Naive thymus-derived CD4-positive, alpha-beta T cell (primary cell): ENCODE measurements at regions of chr17 and their contacts with region 1.

Region 1: GRCh38 chr17:18038861-18039534 is at the starts of genes ATPAF2 and GID4:
- DNase-seq: peak; percentile 99 to 100 (median 100)
- ATAC-seq: peak; percentile 96
- H3K4me3 ChIP-seq: peak within 1 kb of the TSS; percentile 79
- H3K4me3 Mint-ChIP-seq: peak within 1 kb of the TSS; percentile 88 to 100 (median 98)
- H3K27ac ChIP-seq: peak within 1 kb of the TSS; percentile 88
- H3K27ac Mint-ChIP-seq: peak within 1 kb of the TSS; percentile 87 to 99 (median 97)
- H3K4me1 ChIP-seq: peaks cover 23 to 30% of the 10 kb centered on the region in 2 donors
- H3K4me1 Mint-ChIP-seq: peaks cover 42 to 70% (median 53%) of the 10 kb centered on the region in 7 donors
- H3K27me3 ChIP-seq: no peaks in the 10 kb centered on the region
- H3K27me3 Mint-ChIP-seq: no peaks in the 10 kb centered on the region
- total RNA-seq, gene ATPAF2: 26.3 to 36.7 (median 32.5) TPM
- total RNA-seq, gene GID4: 6.0 to 11.4 (median 10.0) TPM

Region 2: DNA sequence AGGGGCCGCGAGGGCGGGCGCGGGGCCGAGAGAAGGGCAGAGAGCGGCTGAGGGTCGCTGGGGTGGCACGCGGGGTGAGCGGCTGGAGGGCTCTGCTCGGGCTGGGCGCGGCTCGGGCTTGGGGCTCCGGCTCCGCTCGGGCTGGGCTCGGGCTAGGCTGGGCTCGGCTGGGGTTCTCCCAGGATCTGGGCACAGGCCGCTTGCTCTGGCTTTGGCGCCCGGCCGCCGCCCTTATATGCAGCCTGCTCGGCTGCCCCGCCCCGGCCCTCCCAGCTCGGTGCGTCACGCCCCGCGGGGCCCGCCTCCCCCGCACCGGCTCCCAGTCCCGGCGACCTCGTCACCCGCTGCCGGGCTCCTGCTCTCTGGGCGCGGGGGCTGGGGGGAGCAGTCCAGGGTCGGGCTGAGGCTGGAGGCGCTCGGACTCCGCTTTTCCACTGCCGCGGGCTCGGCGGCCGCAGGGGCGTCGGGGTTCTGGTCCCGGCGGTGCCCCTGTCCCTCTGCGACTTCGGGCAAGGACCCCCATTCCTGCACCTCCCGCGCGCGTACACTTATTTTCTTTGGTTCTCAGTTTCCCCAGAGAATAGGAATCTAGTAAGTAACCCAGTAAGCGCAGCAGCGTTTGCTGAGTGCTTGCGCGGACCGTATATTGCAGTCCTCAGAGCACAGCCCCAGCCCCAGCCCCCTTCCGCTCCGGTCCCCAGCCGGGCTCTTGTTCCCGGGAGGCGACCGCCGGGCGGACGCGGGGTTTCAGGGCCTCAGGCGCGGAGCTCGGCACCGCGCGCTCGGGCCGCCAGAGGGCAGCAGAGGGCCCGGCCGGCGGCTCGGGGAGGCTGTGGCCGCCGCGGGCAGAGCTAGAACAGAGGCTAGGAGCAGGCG is 542.6 kb before region 1 on chr17 and contains the start of gene RASD1:
- CTCF ChIA-PET with region 1: no interaction called
- POLR2A ChIA-PET with region 1: no interaction called
- intact Hi-C with region 1: loop called (anchors 5 kb)
- DNase-seq: peak; percentile 61 to 89 (median 74)
- ATAC-seq: peak; percentile 90
- H3K4me3 ChIP-seq: peak within 1 kb of the TSS; percentile 61
- H3K4me3 Mint-ChIP-seq: peak within 1 kb of the TSS; percentile 77 to 91 (median 86)
- H3K27ac ChIP-seq: peak within 1 kb of the TSS; percentile 44
- H3K27ac Mint-ChIP-seq: peak within 1 kb of the TSS in 5 of 9 donors; percentile 29 to 86 (median 42)
- H3K4me1 ChIP-seq: peaks cover 3 to 11% of the 10 kb centered on the region in 2 donors
- H3K4me1 Mint-ChIP-seq: peaks cover 12 to 20% (median 14%) of the 10 kb centered on the region in 7 donors
- H3K27me3 ChIP-seq: no peaks in the 10 kb centered on the region
- H3K27me3 Mint-ChIP-seq: peaks cover 5 to 24% (median 6%) of the 10 kb centered on the region in 5 donors
- total RNA-seq, gene RASD1: 0.35 to 2.5 (median 1.0) TPM

Region 3: GRCh38 chr17:17783116-17783824 is 255.7 kb before region 1 on chr17:
- CTCF ChIA-PET with region 1: no interaction called
- POLR2A ChIA-PET with region 1: no interaction called
- intact Hi-C with region 1: loop called in 1 of 2 experiments (anchors 1 kb)
- DNase-seq: peak; percentile 39 to 67 (median 63)
- ATAC-seq: peak; percentile 71
- H3K4me3 ChIP-seq: peak overlapping the region; percentile 72
- H3K4me3 Mint-ChIP-seq: peak overlapping the region; percentile 80 to 95 (median 91)
- H3K27ac ChIP-seq: peak overlapping the region; percentile 67
- H3K27ac Mint-ChIP-seq: peak overlapping the region in 7 of 9 donors; percentile 10 to 88 (median 74)
- H3K4me1 ChIP-seq: peaks cover 7 to 15% of the 10 kb centered on the region in 2 donors
- H3K4me1 Mint-ChIP-seq: peaks cover 15 to 32% (median 25%) of the 10 kb centered on the region in 7 donors
- H3K27me3 ChIP-seq: no peaks in the 10 kb centered on the region
- H3K27me3 Mint-ChIP-seq: peaks cover 0 to 29% (median 0%) of the 10 kb centered on the region in 5 donors

Region 4: GRCh38 chr17:17890773-17891759 is 147.9 kb before region 1 on chr17:
- CTCF ChIA-PET with region 1: interaction called, 29 read pairs
- POLR2A ChIA-PET with region 1: no interaction called
- intact Hi-C with region 1: no loop called
- DNase-seq: peak; percentile 26 to 60 (median 43)
- ATAC-seq: peak; percentile 83
- H3K4me3 ChIP-seq: no peak overlapping the region
- H3K4me3 Mint-ChIP-seq: no peak overlapping the region
- H3K27ac ChIP-seq: no peak overlapping the region
- H3K27ac Mint-ChIP-seq: peak overlapping the region in 7 of 9 donors; percentile 17 to 90 (median 54)
- H3K4me1 ChIP-seq: no peaks in the 10 kb centered on the region
- H3K4me1 Mint-ChIP-seq: peaks cover 3 to 21% (median 17%) of the 10 kb centered on the region in 7 donors
- H3K27me3 ChIP-seq: no peaks in the 10 kb centered on the region
- H3K27me3 Mint-ChIP-seq: no peaks in the 10 kb centered on the region

Region 5: GRCh38 chr17:18183334-18184142 is 144.5 kb after region 1 on chr17 and contains the start of gene ALKBH5:
- CTCF ChIA-PET with region 1: no interaction called
- POLR2A ChIA-PET with region 1: no interaction called
- intact Hi-C with region 1: loop called (anchors 1 kb)
- DNase-seq: peak; percentile 97 to 99 (median 99)
- ATAC-seq: peak; percentile 88
- H3K4me3 ChIP-seq: peak within 1 kb of the TSS; percentile 78
- H3K4me3 Mint-ChIP-seq: peak within 1 kb of the TSS; percentile 83 to 99 (median 94)
- H3K27ac ChIP-seq: peak within 1 kb of the TSS; percentile 93
- H3K27ac Mint-ChIP-seq: peak within 1 kb of the TSS; percentile 96 to 99 (median 98)
- H3K4me1 ChIP-seq: peaks cover 36 to 40% of the 10 kb centered on the region in 2 donors
- H3K4me1 Mint-ChIP-seq: peaks cover 40 to 59% (median 46%) of the 10 kb centered on the region in 7 donors
- H3K27me3 ChIP-seq: no peaks in the 10 kb centered on the region
- H3K27me3 Mint-ChIP-seq: peaks cover 0 to 3% (median 0%) of the 10 kb centered on the region in 5 donors
- total RNA-seq, gene ALKBH5: 97.4 to 135 (median 108) TPM

Region 6: DNA sequence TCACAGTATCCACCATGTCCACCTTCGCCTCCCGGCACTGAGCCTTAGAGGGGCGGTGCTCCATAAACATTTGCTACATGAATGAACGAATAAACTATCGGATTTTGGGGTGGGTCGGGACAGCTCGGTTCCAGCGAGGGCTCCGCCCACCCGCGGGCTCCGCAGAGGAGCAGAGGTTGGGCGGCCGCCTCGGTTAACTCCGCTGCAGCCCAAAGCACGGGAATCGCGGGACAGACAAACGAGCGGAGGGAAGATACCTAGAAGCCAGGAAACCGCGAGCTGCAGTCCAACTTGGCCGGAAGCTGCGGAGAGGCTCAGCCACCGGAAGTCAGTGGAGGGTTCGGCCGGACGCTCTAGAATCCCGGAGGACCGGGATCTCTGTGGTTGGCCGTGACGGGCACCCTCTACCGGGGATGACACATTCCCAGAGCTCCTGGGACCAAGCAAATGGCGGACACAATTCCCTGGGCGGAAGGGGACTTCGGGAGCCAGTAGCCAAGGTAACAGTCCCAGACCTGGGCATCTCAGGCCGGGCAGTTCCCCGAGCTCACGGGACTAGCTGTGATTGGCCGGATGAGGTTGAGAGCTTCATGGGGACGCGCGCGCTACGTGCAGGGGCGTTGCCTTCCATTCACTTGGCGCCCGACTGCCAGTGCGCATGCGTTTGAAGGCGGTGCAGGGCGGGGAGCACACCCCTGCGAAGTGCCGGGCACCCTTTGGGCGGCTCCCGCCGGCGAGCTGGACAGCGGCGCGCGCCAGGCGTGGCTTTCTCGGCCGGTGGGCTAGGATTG is 1338.8 kb after region 1 on chr17:
- CTCF ChIA-PET with region 1: no interaction called
- POLR2A ChIA-PET with region 1: no interaction called
- intact Hi-C with region 1: loop called in 1 of 2 experiments (anchors 5 kb)
- DNase-seq: peak; percentile 85 to 95 (median 92)
- ATAC-seq: peak; percentile 89
- H3K4me3 ChIP-seq: peak overlapping the region; percentile 99
- H3K4me3 Mint-ChIP-seq: peak overlapping the region; percentile 83 to 100 (median 97)
- H3K27ac ChIP-seq: peak overlapping the region; percentile 81
- H3K27ac Mint-ChIP-seq: peak overlapping the region; percentile 83 to 99 (median 97)
- H3K4me1 ChIP-seq: peaks cover 2 to 6% of the 10 kb centered on the region in 2 donors
- H3K4me1 Mint-ChIP-seq: peaks cover 6 to 29% (median 20%) of the 10 kb centered on the region in 7 donors
- H3K27me3 ChIP-seq: no peaks in the 10 kb centered on the region
- H3K27me3 Mint-ChIP-seq: no peaks in the 10 kb centered on the region